ENCODE measurements at regions of chr9 and their contacts with region 1.

Region 1: GRCh38 chr9:72951520-72952380 is 1.1 kb downstream of the ALDH1A1 start:
- DNase-seq: no peak
- H3K4me3 ChIP-seq: peak overlapping the region; percentile 37 to 55 (median 41)
- H3K27ac ChIP-seq: peak overlapping the region; percentile 19 to 59
- H3K4me1 ChIP-seq: no peaks in the 10 kb centered on the region
- H3K27me3 ChIP-seq: no peaks in the 10 kb centered on the region
- CTCF ChIP-seq: no peak
- POLR2A ChIP-seq: no peak

Region 2: DNA sequence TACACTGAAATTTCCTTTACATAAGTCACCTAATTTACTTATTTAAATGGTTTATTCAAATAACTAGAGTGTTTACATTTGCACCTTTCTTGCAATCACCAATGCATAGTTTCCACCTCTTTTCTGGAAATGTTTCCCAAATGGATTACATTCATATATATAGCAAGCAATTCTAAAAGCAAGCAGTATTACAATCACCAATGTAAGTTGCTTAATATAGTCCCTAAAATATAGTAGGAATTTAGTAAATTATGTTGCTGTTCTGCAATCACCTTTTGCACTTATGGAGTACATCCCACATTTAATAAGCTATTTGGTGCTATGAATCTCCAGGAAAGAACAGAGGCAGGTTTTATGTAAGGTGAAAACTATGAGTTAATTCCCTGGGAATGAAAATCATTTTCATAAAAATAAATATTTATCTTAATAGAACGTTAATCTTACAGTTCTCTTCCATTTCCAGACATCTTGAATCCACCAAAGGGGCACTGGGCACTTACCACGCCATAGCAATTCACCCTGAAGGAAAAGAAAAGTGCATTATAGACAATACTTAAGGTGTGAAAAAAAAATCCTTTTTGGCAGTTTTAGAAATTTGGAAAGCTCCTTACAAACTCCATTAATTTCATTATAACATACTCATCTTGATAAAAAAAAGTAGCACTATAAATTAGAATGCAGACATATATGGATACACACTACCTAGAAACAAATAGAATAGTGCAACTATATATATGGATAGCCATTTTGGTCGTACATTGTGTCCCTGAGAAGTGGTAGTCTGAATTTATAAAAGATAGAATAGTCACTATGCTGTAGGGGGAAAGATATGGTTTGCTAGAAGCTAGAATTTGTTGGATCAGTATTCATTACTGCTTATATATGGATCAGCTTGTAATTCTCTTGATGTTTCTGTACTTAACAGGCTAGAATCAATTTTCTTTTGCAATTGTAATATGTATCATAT is 46.0 kb before region 1 on chr9:
- intact Hi-C with region 1: loop called (anchors 2 kb)
- DNase-seq: no peak
- H3K4me3 ChIP-seq: no peak overlapping the region
- H3K27ac ChIP-seq: no peak overlapping the region
- H3K4me1 ChIP-seq: no peaks in the 10 kb centered on the region
- H3K27me3 ChIP-seq: no peaks in the 10 kb centered on the region
- CTCF ChIP-seq: no peak
- POLR2A ChIP-seq: no peak

Region 3: GRCh38 chr9:74236857-74237256 is 1285.1 kb after region 1 on chr9:
- intact Hi-C with region 1: no loop called
- DNase-seq: no peak
- H3K4me3 ChIP-seq: no peak overlapping the region
- H3K27ac ChIP-seq: no peak overlapping the region
- H3K4me1 ChIP-seq: no peaks in the 10 kb centered on the region
- H3K27me3 ChIP-seq: no peaks in the 10 kb centered on the region
- CTCF ChIP-seq: no peak
- POLR2A ChIP-seq: no peak